ENCODE measurements at regions of chr16 and their contacts with region 1.

Region 1: DNA sequence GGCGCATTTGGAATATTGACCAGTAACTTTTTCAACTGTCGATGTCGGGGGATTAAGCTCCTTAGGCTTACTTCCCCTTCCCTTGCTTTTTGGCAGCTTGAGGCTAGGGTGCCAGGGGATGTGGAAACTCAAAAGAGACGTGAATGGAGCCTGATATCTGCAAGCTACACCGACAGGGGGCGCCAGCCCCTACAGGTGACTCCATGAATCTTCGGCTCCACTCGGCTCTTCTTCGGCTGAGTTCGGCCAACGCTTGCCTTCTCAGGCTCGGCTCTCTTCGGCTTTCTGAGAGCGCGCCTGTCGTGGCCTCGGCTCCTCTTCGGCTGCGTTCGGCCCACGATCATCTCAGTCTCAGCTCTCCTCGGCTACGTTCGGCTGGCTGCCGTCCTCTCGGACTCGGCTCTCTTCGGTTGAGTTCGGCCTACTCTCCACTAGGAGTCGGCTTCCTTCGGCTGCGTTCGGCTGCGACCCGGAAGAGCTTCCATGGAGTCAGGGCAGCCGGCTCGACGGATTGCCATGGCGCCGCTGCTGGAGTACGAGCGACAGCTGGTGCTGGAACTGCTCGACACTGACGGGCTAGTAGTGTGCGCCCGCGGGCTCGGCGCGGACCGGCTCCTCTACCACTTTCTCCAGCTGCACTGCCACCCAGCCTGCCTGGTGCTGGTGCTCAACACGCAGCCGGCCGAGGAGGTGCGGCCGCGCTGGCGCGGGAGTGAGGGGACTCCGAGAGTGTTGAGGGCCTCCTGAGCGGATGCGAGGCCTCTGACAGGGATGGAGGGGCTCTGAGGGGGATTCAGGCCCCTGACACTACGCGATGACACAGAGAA is at the start of gene ERCC4:
- DNase-seq: peak; percentile 100
- ATAC-seq: peak; percentile 98 to 99 (median 98)
- H3K4me3 ChIP-seq: peak within 1 kb of the TSS; percentile 51 to 94 (median 80)
- H3K27ac ChIP-seq: peak within 1 kb of the TSS in 9 of 10 donors; percentile 59 to 90 (median 84)
- H3K4me1 ChIP-seq: peaks cover 7 to 38% (median 33%) of the 10 kb centered on the region in 9 donors
- H3K27me3 ChIP-seq: no peaks in the 10 kb centered on the region
- CTCF ChIP-seq: peak; percentile 71 to 93 (median 89)
- total RNA-seq, gene ERCC4: 5.1 to 13.1 (median 10.2) TPM

Region 2: DNA sequence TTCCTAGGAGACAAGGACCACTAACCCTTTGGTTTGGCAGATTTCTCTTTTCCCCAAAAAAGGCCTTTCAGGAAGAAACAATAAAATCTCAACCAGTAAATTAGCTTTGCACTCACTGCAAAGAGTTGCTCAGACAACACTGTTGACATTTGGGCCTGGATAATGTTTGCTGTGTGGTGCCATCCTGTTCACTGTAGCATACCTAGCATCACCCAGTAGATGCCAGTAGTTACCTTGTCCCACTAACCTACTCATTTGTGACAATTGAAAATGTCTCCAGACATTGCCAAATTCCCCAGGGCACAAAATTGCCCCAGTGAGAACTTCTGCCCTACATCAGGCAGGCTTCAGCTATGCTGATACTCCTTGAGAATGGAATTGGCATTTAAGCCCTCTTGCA is 177.0 kb before region 1 on chr16:
- intact Hi-C with region 1: loop called in 1 of 10 experiments (anchors 5 kb)
- DNase-seq: no peak
- ATAC-seq: no peak
- H3K4me3 ChIP-seq: no peak overlapping the region
- H3K27ac ChIP-seq: no peak overlapping the region
- H3K4me1 ChIP-seq: no peaks in the 10 kb centered on the region
- H3K27me3 ChIP-seq: no peaks in the 10 kb centered on the region
- CTCF ChIP-seq: no peak

Region 3: DNA sequence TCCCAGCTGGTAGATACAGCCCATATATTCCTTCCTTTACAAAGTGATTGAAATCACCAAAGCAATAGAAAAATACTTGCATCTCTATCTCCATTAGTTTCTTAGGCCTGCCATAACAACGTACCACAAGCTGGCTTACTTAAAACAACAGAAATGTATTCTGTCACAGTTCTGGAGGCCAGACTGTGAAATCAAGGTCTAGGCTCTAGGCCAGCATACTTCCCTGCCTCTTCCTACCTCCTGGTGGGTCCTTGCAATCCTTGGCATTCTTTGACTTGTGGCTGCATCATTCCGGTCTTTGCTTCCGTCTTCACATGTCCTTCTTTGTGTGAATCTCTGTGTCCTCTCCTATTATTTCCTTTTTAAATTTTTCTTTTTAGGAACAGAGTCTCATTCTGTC is 62.6 kb after region 1 on chr16:
- intact Hi-C with region 1: no loop called
- DNase-seq: no peak
- ATAC-seq: no peak
- H3K4me3 ChIP-seq: no peak overlapping the region
- H3K27ac ChIP-seq: no peak overlapping the region
- H3K4me1 ChIP-seq: peaks cover 0 to 6% (median 0%) of the 10 kb centered on the region in 9 donors
- H3K27me3 ChIP-seq: no peaks in the 10 kb centered on the region
- CTCF ChIP-seq: no peak

Region 4: DNA sequence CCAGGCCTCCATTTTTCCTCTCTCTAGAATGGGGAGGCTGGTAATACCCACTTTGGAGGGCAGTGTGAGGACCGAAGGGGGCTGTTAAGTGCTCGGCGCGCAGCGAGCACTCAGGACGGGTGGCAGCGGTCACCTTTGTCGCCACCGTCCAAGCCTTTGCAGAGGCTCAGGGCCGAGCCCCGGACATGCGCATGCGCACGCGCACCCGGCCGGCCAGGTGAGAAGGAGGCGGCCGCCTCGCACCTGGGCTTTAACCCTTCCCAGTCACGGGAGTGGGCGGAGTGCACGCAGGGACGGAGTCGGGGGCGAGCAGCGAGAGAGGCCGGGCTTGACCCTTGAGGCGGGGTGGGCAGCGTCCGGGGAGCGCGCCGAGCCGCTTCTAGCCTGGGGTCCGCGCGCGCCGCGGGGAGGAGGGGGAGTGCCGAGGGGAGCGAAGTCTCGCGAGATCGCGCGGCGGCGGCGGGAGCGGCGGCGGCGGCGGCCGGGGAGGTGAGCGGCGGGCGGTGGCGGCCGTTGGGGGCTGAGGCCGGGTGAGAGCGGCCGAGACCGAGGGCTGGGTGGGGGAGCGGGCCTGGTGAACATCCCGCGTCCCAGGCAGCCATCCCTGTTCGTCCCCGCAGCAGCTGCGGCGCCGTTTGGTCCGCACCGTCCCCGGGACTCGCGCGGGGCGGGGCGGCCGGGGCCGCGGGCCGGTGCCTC is 151.1 kb after region 1 on chr16 and contains the start of gene MRTFB:
- intact Hi-C with region 1: loop called in 5 of 10 experiments (anchors 5 to 10 kb)
- DNase-seq: peak; percentile 77 to 87
- ATAC-seq: peak; percentile 80 to 95 (median 92)
- H3K4me3 ChIP-seq: peak within 1 kb of the TSS; percentile 73 to 99 (median 92)
- H3K27ac ChIP-seq: peak within 1 kb of the TSS; percentile 53 to 94 (median 86)
- H3K4me1 ChIP-seq: peaks cover 0 to 37% (median 19%) of the 10 kb centered on the region in 9 donors
- H3K27me3 ChIP-seq: no peaks in the 10 kb centered on the region
- CTCF ChIP-seq: no peak
- total RNA-seq, gene MRTFB: 20.9 to 41.8 (median 33.0) TPM

Region 5: DNA sequence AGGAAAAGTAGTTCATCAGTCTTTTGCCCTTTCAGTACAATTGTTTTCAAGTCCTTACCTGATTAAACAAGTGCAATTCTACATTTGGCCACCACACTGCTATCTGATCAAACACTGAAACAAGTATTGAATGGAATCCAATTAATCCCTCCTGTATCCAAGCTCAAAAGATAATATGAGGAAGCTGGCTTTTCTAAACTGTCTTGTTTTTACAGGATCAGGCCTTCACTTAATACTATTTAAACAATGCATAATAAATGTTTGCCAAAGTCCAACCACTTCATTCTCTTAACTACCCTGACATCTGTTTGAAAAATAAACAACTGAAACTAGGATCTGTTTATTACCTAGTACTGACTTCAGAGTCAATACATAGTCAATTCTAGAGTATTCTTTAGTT is 282.8 kb after region 1 on chr16:
- intact Hi-C with region 1: loop called in 2 of 10 experiments (anchors 10 kb)
- DNase-seq: no peak
- ATAC-seq: peak in 5 of 8 donors; percentile 42 to 71 (median 55)
- H3K4me3 ChIP-seq: peak overlapping the region in 5 of 10 donors; percentile 14 to 36 (median 26)
- H3K27ac ChIP-seq: peak overlapping the region in 8 of 10 donors; percentile 10 to 77 (median 37)
- H3K4me1 ChIP-seq: peaks cover 0 to 50% (median 34%) of the 10 kb centered on the region in 9 donors
- H3K27me3 ChIP-seq: no peaks in the 10 kb centered on the region
- CTCF ChIP-seq: peak in 8 of 9 donors; percentile 19 to 50 (median 37)

Region 6: DNA sequence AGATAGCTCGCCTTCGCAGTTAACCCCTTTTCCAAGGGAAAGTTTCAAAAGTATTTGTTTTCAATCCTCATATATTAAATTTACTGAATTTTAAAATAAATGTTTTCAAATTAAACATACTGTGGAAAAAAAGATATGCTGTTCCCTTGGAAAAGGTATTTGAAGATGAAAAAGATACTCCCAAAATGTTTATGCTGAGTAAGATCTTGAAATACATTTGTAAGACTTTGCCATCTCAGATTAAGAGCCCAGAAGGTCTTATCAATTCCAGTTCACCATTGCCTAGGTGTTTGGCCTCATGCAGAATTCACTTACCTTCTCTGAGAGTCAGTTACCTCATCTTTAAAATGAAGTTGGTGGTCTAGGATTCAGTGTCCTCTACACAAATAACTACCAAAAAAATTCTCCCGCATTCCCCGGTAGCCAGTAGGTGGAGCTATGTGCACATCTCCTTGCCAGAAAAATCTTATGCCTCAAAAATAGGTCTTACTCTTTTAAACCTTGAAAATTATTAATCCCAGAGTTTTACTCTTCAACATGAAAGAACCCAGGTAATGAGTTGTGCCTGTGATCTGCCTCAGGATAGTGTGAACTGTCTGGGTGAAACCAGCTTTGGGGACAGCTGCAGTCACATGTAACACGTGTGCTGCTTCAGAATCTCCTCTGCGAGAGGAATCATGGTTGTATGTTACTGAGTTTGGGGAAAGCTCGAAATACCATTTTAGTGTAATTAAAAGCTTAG is 329.6 kb after region 1 on chr16:
- intact Hi-C with region 1: loop called in 8 of 10 experiments (anchors 1 to 10 kb)
- DNase-seq: peak in 1 of 2 donors; percentile 43
- ATAC-seq: peak in 1 of 8 donors; percentile 14
- H3K4me3 ChIP-seq: no peak overlapping the region
- H3K27ac ChIP-seq: no peak overlapping the region
- H3K4me1 ChIP-seq: no peaks in the 10 kb centered on the region
- H3K27me3 ChIP-seq: no peaks in the 10 kb centered on the region
- CTCF ChIP-seq: peak; percentile 62 to 89 (median 79)

Region 7: GRCh38 chr16:14405611-14406537 is 486.0 kb after region 1 on chr16:
- intact Hi-C with region 1: no loop called
- DNase-seq: peak in 1 of 2 donors; percentile 19
- ATAC-seq: peak in 3 of 8 donors; percentile 36 to 54 (median 49)
- H3K4me3 ChIP-seq: no peak overlapping the region
- H3K27ac ChIP-seq: no peak overlapping the region
- H3K4me1 ChIP-seq: peaks cover 0 to 4% (median 0%) of the 10 kb centered on the region in 9 donors
- H3K27me3 ChIP-seq: no peaks in the 10 kb centered on the region
- CTCF ChIP-seq: no peak

Region 8: DNA sequence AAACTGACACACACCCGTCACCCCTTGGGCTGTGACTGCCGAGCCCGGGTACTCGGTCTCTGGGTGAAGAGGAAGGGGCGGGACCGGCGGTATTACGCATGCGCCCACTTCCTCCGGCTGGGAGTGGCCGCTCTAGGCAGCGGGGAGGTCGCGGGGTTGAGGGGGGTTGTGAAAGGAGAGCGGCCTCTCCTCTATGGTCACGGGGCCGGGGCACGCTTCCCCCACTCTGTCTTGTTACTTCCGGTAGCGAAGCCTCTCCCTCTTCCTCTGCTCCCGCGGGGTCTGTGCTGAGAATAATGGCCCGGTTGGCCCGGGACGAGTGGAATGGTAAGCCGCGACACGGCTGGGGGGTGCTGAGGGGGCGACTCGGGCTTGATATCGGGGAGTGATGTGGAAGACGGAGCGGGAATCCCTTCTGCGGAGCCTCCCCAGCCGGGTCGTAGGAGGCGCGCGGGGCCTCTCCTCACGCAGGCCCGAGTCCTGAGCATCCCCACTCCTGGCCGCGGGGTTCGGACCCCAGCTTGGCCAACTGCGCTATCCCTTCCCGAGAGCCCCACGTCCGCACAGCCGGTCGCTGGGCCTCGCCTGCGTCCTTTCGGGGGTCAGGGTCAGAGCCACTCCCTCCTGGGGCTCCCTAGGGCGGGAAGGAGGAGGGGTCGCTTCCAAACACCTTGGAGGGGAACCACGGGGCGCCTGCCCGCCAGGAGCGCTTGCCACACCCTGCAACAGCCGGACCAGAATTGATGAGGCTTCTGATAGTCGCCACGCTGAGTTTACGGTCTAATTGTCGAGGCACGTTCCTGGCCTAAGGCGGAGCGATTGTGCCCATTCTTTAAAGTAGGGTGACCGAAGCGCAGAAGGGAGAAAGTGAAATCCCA is 713.0 kb after region 1 on chr16 and contains the start of gene BFAR:
- intact Hi-C with region 1: loop called in 1 of 10 experiments (anchors 10 kb)
- DNase-seq: peak; percentile 99
- ATAC-seq: peak; percentile 94 to 96 (median 95)
- H3K4me3 ChIP-seq: peak within 1 kb of the TSS; percentile 59 to 99 (median 97)
- H3K27ac ChIP-seq: peak within 1 kb of the TSS; percentile 48 to 98 (median 95)
- H3K4me1 ChIP-seq: peaks cover 0 to 77% (median 54%) of the 10 kb centered on the region in 9 donors
- H3K27me3 ChIP-seq: no peaks in the 10 kb centered on the region
- CTCF ChIP-seq: no peak
- total RNA-seq, gene BFAR: 33.2 to 42.5 (median 36.5) TPM

Measured in heart right ventricle (tissue), 16 donors.